ENCODE measurements at regions of chr10 and their contacts with region 1.

Region 1: DNA sequence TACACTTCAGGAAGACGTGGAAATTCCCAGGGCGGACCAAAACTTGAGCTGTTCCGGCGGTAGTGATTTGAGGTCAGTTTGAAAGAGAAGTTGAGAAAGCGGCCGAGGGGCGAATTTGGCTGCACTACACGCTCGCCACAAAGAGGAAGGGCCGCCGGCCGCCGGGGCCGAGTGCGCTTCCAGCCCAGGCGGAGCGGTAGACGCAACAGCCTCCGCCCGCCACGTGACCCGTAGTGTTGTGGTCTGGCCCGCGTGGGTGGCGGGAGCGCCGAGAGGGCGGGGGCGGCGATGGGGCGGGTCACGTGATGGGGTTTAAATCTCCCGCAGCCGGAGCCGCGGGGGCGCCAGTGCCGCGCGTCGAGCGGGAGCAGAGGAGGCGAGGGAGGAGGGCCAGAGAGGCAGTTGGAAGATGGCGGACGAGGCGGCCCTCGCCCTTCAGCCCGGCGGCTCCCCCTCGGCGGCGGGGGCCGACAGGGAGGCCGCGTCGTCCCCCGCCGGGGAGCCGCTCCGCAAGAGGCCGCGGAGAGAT is at the start of gene SIRT1:
- DNase-seq: peak; percentile 90 to 93 (median 92)
- H3K4me3 ChIP-seq: peak within 1 kb of the TSS; percentile 36 to 55
- H3K4me3 Mint-ChIP-seq: peak within 1 kb of the TSS; percentile 90 to 98 (median 94)
- H3K27ac ChIP-seq: peak within 1 kb of the TSS; percentile 55
- H3K27ac Mint-ChIP-seq: peak within 1 kb of the TSS; percentile 95 to 98 (median 96)
- H3K4me1 ChIP-seq: peaks cover 40% of the 10 kb centered on the region
- H3K4me1 Mint-ChIP-seq: peaks cover 19 to 53% (median 27%) of the 10 kb centered on the region in 4 donors
- H3K27me3 ChIP-seq: no peaks in the 10 kb centered on the region
- H3K27me3 Mint-ChIP-seq: no peaks in the 10 kb centered on the region
- total RNA-seq, gene SIRT1: 57.1 to 58.8 TPM

Region 2: DNA sequence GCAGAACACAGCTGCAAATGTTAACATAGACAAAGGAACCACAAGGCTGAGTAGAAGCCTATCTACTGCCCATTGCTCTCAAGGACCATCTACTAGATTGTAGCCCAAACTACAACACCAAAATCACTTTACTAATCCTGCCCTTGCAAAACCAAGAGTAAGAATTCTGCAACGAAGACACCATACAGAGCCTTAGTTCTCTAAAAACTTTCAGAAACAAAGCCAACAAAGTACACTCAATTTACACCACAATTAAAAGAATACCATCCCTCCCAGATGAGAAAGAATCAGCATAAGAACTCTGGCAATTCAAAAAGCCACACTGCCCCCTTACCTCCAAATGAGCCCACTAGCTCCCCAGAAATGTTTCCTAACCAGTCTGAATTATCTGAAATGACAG is 482.7 kb before region 1 on chr10:
- CTCF ChIA-PET with region 1: no interaction called
- POLR2A ChIA-PET with region 1: no interaction called
- intact Hi-C with region 1: no loop called
- DNase-seq: no peak
- H3K4me3 ChIP-seq: no peak overlapping the region
- H3K4me3 Mint-ChIP-seq: no peak overlapping the region
- H3K27ac ChIP-seq: no peak overlapping the region
- H3K27ac Mint-ChIP-seq: no peak overlapping the region
- H3K4me1 ChIP-seq: no peaks in the 10 kb centered on the region
- H3K4me1 Mint-ChIP-seq: no peaks in the 10 kb centered on the region
- H3K27me3 ChIP-seq: no peaks in the 10 kb centered on the region
- H3K27me3 Mint-ChIP-seq: peaks cover 0 to 17% of the 10 kb centered on the region in 2 donors

Region 3: GRCh38 chr10:67764012-67764822 is 120.2 kb before region 1 on chr10:
- CTCF ChIA-PET with region 1: no interaction called
- POLR2A ChIA-PET with region 1: interaction called, 12 read pairs
- intact Hi-C with region 1: loop called (anchors 1 kb)
- DNase-seq: peak; percentile 96 to 99 (median 97)
- H3K4me3 ChIP-seq: peak overlapping the region; percentile 58 to 98
- H3K4me3 Mint-ChIP-seq: peak overlapping the region; percentile 90 to 98 (median 95)
- H3K27ac ChIP-seq: peak overlapping the region; percentile 73
- H3K27ac Mint-ChIP-seq: peak overlapping the region; percentile 98 to 100 (median 99)
- H3K4me1 ChIP-seq: peaks cover 14% of the 10 kb centered on the region
- H3K4me1 Mint-ChIP-seq: peaks cover 9 to 28% (median 14%) of the 10 kb centered on the region in 4 donors
- H3K27me3 ChIP-seq: no peaks in the 10 kb centered on the region
- H3K27me3 Mint-ChIP-seq: peaks cover 4 to 9% of the 10 kb centered on the region in 2 donors

Region 4: GRCh38 chr10:67903581-67903980 is 19.2 kb after region 1 on chr10:
- CTCF ChIA-PET with region 1: interaction called, 3 read pairs
- POLR2A ChIA-PET with region 1: interaction called, 10 read pairs
- intact Hi-C with region 1: no loop called
- DNase-seq: no peak
- H3K4me3 ChIP-seq: no peak overlapping the region
- H3K4me3 Mint-ChIP-seq: no peak overlapping the region
- H3K27ac ChIP-seq: no peak overlapping the region
- H3K27ac Mint-ChIP-seq: peak overlapping the region in 1 of 7 donors; percentile 78
- H3K4me1 ChIP-seq: no peaks in the 10 kb centered on the region
- H3K4me1 Mint-ChIP-seq: peaks cover 13 to 33% (median 21%) of the 10 kb centered on the region in 4 donors
- H3K27me3 ChIP-seq: no peaks in the 10 kb centered on the region
- H3K27me3 Mint-ChIP-seq: no peaks in the 10 kb centered on the region

Region 5: GRCh38 chr10:67976292-67977245 is 92.2 kb after region 1 on chr10:
- CTCF ChIA-PET with region 1: no interaction called
- POLR2A ChIA-PET with region 1: no interaction called
- intact Hi-C with region 1: no loop called
- DNase-seq: no peak
- H3K4me3 ChIP-seq: no peak overlapping the region
- H3K4me3 Mint-ChIP-seq: no peak overlapping the region
- H3K27ac ChIP-seq: no peak overlapping the region
- H3K27ac Mint-ChIP-seq: peak overlapping the region in 1 of 7 donors; percentile 60
- H3K4me1 ChIP-seq: no peaks in the 10 kb centered on the region
- H3K4me1 Mint-ChIP-seq: peaks cover 2 to 11% (median 6%) of the 10 kb centered on the region in 4 donors
- H3K27me3 ChIP-seq: no peaks in the 10 kb centered on the region
- H3K27me3 Mint-ChIP-seq: no peaks in the 10 kb centered on the region

Region 6: DNA sequence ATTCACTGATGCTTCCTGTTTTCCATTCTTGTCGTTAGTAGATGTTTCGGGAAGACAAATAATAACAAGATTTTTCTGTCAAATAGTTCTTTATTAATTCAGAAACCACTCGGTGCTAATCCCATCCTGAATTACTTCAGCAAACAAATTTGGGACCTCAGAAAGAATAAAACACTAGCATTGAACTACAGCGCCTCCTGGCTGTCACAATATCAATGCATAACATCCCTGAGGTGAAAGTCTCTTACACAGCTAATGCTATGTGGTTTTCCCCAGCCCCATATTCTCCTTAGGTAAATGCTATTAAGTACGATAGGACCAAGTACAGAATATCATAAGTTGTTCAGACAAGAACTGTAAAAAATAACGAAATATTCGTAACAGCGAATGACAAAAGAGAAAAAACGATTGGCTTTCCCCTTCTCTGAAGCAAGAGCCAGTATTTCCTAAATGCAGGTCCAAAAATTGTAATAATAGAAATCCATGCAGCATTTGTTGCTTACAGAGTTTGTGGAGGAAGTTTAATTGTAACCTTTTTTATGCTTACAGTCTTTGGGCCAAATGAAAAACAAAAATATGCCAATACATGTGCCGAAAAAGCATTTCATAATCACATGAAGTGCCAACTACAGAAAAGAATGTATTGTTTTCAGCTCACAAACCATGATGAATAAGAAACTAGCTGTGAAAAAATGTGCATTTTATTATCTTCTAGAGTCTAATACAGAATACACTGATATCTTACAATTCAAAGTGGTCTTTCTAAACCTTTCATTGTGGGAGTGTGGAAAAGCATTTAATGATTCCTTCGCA is 272.2 kb after region 1 on chr10:
- CTCF ChIA-PET with region 1: interaction called, 11 read pairs
- POLR2A ChIA-PET with region 1: no interaction called
- intact Hi-C with region 1: no loop called
- DNase-seq: peak; percentile 51 to 55 (median 53)
- H3K4me3 ChIP-seq: no peak overlapping the region
- H3K4me3 Mint-ChIP-seq: no peak overlapping the region
- H3K27ac ChIP-seq: no peak overlapping the region
- H3K27ac Mint-ChIP-seq: no peak overlapping the region
- H3K4me1 ChIP-seq: no peaks in the 10 kb centered on the region
- H3K4me1 Mint-ChIP-seq: peaks cover 0 to 1% (median 0%) of the 10 kb centered on the region in 4 donors
- H3K27me3 ChIP-seq: no peaks in the 10 kb centered on the region
- H3K27me3 Mint-ChIP-seq: peaks cover 0 to 7% of the 10 kb centered on the region in 2 donors

Region 7: GRCh38 chr10:68901104-68901927 is 1016.9 kb after region 1 on chr10 and contains the start of gene DDX50:
- CTCF ChIA-PET with region 1: no interaction called
- POLR2A ChIA-PET with region 1: interaction called, 4 read pairs
- intact Hi-C with region 1: loop called (anchors 10 kb)
- DNase-seq: peak; percentile 94 to 98 (median 96)
- H3K4me3 ChIP-seq: peak within 1 kb of the TSS; percentile 58 to 85
- H3K4me3 Mint-ChIP-seq: peak within 1 kb of the TSS; percentile 97 to 99 (median 98)
- H3K27ac ChIP-seq: peak within 1 kb of the TSS; percentile 97
- H3K27ac Mint-ChIP-seq: peak within 1 kb of the TSS; percentile 99 to 100 (median 99)
- H3K4me1 ChIP-seq: peaks cover 37% of the 10 kb centered on the region
- H3K4me1 Mint-ChIP-seq: peaks cover 25 to 61% (median 40%) of the 10 kb centered on the region in 4 donors
- H3K27me3 ChIP-seq: no peaks in the 10 kb centered on the region
- H3K27me3 Mint-ChIP-seq: no peaks in the 10 kb centered on the region
- total RNA-seq, gene DDX50: 41.1 to 41.9 TPM